Activated CD8-positive, alpha-beta T cell treated with anti-CD3 and anti-CD28 coated beads for 36 hours (primary cell): ENCODE measurements at regions of chr3 and their contacts with region 1.

Region 1: DNA sequence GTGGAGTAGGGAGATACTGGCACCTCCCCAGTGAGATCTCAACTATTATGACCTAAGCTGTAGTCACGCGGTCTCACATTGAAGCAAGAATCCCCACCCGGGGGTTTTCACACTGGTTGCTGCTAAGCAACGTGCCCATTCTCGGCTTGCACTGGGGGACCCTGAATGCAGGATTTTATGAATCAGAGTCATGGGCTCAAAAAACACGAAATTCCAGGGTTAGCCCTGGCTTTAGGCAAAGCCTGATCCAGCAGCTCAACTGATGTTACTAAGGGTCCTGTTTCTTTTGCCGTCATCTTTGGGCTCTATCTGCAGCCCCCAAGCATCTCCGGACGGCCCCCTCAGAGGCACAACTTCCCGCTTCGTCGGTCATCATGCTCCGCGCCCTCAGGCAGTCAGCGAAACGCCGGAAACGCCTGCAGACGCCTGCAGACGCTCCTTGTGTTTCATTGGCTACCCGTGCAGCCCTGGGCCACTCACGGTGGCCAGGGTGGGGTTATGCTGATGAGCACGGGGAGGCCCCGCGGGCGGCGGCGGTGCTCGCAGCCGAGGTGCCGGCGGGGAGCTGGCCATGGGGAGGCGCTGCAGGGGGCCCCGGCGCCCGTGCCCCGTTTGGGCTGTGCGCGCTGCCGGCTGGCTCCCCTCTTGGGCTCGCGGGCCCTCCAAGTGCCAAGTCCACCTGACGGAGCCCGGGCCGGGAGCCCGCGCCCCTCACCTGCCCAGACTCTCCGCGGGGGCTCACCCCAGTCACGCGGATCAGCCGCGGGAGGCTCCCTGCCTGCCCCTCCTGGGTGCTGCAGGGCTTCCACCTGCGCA is 25.8 kb downstream of the EFCC1 start:
- DNase-seq: peak; percentile 96
- ATAC-seq: peak; percentile 99
- H3K4me3 Mint-ChIP-seq: peak overlapping the region; percentile 73
- H3K27ac Mint-ChIP-seq: peak overlapping the region; percentile 91
- H3K4me1 Mint-ChIP-seq: peaks cover 22% of the 10 kb centered on the region
- H3K27me3 Mint-ChIP-seq: no peaks in the 10 kb centered on the region
- CTCF ChIP-seq: peak; percentile 94

Region 2: GRCh38 chr3:129003578-129004160 is 23.3 kb before region 1 on chr3:
- CTCF ChIA-PET with region 1: interaction called, 66 read pairs
- POLR2A ChIA-PET with region 1: interaction called, 15 read pairs
- intact Hi-C with region 1: no loop called
- DNase-seq: peak; percentile 63
- ATAC-seq: peak; percentile 71
- H3K4me3 Mint-ChIP-seq: peak overlapping the region; percentile 71
- H3K27ac Mint-ChIP-seq: no peak overlapping the region
- H3K4me1 Mint-ChIP-seq: peaks cover 33% of the 10 kb centered on the region
- H3K27me3 Mint-ChIP-seq: peaks cover 20% of the 10 kb centered on the region
- CTCF ChIP-seq: no peak

Region 3: DNA sequence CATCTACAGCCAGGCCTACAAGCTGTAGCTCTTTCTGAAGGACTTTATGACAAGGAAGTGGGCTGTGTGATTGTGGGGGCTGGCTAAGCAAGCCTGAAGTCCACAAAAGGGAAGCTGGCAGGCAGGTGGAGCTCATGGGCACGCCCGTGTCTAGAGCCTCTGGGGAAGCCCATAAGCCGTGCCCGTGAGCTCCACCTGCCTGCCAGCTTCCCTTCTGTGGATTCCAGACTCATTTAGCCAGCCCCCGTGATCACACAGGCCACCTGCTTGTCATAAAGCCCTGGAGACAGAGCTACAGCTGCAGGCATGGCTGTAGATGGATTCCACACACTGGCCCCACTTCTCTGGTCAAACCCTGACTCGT is 10.6 kb before region 1 on chr3:
- CTCF ChIA-PET with region 1: interaction called, 77 read pairs
- POLR2A ChIA-PET with region 1: interaction called, 56 read pairs
- intact Hi-C with region 1: no loop called
- DNase-seq: peak; percentile 82
- ATAC-seq: peak; percentile 85
- H3K4me3 Mint-ChIP-seq: peak overlapping the region; percentile 71
- H3K27ac Mint-ChIP-seq: peak overlapping the region; percentile 97
- H3K4me1 Mint-ChIP-seq: peaks cover 31% of the 10 kb centered on the region
- H3K27me3 Mint-ChIP-seq: no peaks in the 10 kb centered on the region
- CTCF ChIP-seq: peak; percentile 34

Region 4: DNA sequence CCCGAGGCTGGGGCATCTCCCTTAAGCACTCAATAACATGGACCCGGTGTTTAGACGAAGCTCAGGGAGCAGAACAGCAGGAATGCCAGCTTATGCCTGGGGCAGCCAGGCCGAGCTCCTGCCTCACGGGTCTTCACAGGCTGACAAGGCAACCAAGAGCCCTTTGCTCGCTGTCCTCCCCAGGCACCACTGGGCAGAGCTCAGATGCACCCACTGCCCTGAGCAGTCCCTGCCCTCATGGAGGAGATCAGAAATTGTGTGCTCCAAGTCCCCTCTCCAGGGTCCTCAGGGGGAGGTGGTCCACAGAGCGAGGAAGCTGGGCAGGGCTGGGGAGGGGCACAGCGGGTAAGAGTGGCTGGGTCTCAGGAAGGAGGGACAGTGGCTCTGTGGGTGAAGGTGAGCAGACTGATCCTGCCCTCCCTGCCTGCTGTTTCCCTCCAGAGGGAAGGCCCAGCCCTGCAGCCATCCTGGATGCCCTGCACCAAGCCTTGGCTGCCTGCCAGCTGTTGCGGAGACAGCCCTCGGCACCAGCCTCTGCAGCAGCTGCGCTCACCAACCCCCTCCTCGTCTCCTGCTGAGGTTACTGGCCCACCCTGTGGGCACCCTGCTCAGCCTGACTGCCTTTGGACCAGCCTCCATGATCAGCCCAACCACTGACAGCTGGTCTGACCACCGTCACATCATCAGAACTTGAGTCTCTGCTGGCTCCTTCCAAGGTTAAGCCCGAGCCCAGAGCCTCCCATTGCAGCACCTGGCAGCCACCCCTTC is 12.5 kb after region 1 on chr3:
- CTCF ChIA-PET with region 1: interaction called, 18 read pairs
- POLR2A ChIA-PET with region 1: interaction called, 8 read pairs
- intact Hi-C with region 1: no loop called
- DNase-seq: no peak
- ATAC-seq: no peak
- H3K4me3 Mint-ChIP-seq: no peak overlapping the region
- H3K27ac Mint-ChIP-seq: no peak overlapping the region
- H3K4me1 Mint-ChIP-seq: peaks cover 15% of the 10 kb centered on the region
- H3K27me3 Mint-ChIP-seq: peaks cover 10% of the 10 kb centered on the region
- CTCF ChIP-seq: no peak

Region 5: DNA sequence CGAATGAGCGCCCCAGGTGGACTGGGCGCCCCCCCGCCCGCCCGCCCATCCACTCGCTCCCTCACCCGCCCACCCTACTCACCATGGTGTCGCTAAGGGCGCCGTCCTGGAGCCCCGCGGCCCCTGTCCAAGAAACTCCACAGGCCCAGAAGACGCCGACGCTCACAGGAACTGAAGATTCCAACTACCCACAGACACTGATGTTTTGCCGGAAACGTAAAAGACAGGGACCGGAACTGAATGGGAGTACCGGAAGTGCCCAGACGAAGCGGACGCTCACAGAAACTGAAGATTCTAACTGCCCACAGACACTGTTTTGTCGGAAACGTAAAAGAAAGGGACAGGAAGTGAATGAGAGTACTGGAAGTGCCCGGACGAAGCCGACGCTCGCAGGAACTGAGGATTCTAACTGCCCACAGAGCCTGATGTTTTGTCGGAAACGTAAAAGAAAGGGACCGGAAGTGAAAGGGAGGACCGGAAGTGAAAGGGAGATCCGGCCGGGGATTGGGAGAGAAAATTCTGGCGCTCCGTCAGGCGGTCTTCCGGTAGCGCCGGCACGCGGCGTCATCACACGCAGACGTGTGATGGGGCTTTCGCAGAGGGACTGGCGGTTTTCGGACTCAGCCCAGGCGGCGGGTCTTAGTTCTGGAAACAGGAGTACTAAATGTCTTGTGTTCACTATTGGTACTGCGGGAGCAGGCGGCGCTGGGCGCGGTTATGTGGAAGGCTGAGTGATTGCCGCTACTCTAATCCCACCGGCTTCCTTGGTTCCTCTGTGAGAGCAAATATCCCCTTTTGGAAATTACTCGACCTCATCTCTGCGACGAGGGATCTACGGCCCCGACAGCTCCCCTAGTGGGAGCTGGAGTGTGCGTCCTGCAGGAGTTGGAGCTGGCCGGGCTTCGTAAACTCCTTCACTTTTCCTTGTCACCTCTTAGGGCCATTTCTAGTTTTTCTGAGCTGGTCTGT is 134.2 kb after region 1 on chr3 and contains the start of gene ISY1:
- CTCF ChIA-PET with region 1: interaction called, 10 read pairs
- POLR2A ChIA-PET with region 1: no interaction called
- intact Hi-C with region 1: no loop called
- DNase-seq: peak; percentile 91
- ATAC-seq: peak; percentile 82
- H3K4me3 Mint-ChIP-seq: peak within 1 kb of the TSS; percentile 88
- H3K27ac Mint-ChIP-seq: peak within 1 kb of the TSS; percentile 98
- H3K4me1 Mint-ChIP-seq: peaks cover 27% of the 10 kb centered on the region
- H3K27me3 Mint-ChIP-seq: no peaks in the 10 kb centered on the region
- CTCF ChIP-seq: peak; percentile 84
- total RNA-seq, gene ISY1: 66.7 to 68.5 TPM

Region 6: GRCh38 chr3:129289201-129289921 is 262.4 kb after region 1 on chr3:
- CTCF ChIA-PET with region 1: no interaction called
- POLR2A ChIA-PET with region 1: no interaction called
- intact Hi-C with region 1: no loop called
- DNase-seq: no peak
- ATAC-seq: peak; percentile 51
- H3K4me3 Mint-ChIP-seq: no peak overlapping the region
- H3K27ac Mint-ChIP-seq: peak overlapping the region; percentile 19
- H3K4me1 Mint-ChIP-seq: peaks cover 20% of the 10 kb centered on the region
- H3K27me3 Mint-ChIP-seq: no peaks in the 10 kb centered on the region
- CTCF ChIP-seq: no peak